ENCODE measurements at regions of chr19 and their contacts with region 1.

Region 1: DNA sequence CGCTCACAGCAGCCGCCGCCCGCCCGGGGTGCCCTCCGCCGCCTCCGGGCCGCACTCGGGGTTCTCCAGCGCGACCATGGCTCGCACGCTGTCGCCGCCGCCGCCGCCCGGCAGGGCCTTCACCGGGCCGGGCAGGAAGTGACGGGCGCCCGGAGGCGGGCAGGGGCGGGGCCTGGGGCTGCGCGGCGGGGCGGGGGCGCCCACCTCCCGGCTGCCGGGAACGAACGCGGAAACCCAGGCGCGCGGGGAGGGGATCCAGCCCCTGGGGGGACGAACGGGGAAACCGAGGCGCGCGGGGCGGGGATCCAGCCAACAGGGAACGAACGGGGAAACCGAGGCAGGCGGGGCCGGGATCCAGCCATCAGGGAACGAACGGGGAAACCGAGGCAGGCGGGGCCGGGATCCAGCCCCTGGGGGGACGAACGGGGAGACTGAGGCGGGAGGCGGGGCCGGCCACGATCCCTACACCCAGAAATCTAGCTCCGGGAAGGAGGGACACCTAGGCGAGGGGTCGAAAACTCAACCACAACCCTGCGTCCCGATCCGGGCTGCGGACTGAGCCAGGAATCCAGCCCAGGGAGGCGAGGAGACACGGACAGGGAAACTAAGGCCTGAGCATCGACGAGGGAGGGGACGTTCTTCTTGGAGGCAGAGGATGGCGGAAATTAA is at the start of gene R3HDM4:
- DNase-seq: no peak
- ATAC-seq: peak; percentile 57
- H3K4me3 ChIP-seq: peak within 1 kb of the TSS; percentile 78 to 81
- H3K27ac ChIP-seq: peak within 1 kb of the TSS; percentile 80
- H3K4me1 ChIP-seq: peaks cover 31 to 55% of the 10 kb centered on the region in 2 experiments
- H3K27me3 ChIP-seq: no peaks in the 10 kb centered on the region
- CTCF ChIP-seq: no peak
- POLR2A ChIP-seq: peak; percentile 42
- RAD21 ChIP-seq: no peak
- total RNA-seq, gene R3HDM4: 92.3 TPM

Region 2: GRCh38 chr19:883661-884211 is 29.5 kb before region 1 on chr19:
- CTCF ChIA-PET with region 1: no interaction called
- POLR2A ChIA-PET with region 1: interaction called, 4 read pairs
- RAD21 ChIA-PET with region 1: no interaction called
- intact Hi-C with region 1: loop called (anchors 1 kb)
- DNase-seq: peak; percentile 91
- ATAC-seq: peak; percentile 95
- H3K4me3 ChIP-seq: no peak overlapping the region
- H3K27ac ChIP-seq: peak overlapping the region; percentile 77
- H3K4me1 ChIP-seq: peaks cover 20 to 22% of the 10 kb centered on the region in 2 experiments
- H3K27me3 ChIP-seq: no peaks in the 10 kb centered on the region
- CTCF ChIP-seq: peak; percentile 72 to 90 (median 80)
- POLR2A ChIP-seq: no peak
- RAD21 ChIP-seq: peak; percentile 96

Measured in HCT116 (cell line).